ENCODE measurements at regions of chr11 and their contacts with region 1.

Region 1: GRCh38 chr11:29208117-29208516 is 808.7 kb downstream of the KCNA4 start:
- DNase-seq: no peak
- ATAC-seq: no peak
- H3K4me3 ChIP-seq: no peak overlapping the region
- H3K27ac ChIP-seq: no peak overlapping the region
- H3K4me1 ChIP-seq: no peaks in the 10 kb centered on the region
- H3K27me3 ChIP-seq: no peaks in the 10 kb centered on the region
- CTCF ChIP-seq: no peak
- EP300 ChIP-seq: no peak
- POLR2A ChIP-seq: no peak
- RAD21 ChIP-seq: no peak

Region 2: GRCh38 chr11:29260939-29261705 is 53.0 kb after region 1 on chr11:
- CTCF ChIA-PET with region 1: no interaction called
- POLR2A ChIA-PET with region 1: no interaction called
- in situ Hi-C with region 1: no loop called
- intact Hi-C with region 1: loop called (anchors 1 kb)
- DNase-seq: peak; percentile 51
- ATAC-seq: peak; percentile 100
- H3K4me3 ChIP-seq: no peak overlapping the region
- H3K27ac ChIP-seq: no peak overlapping the region
- H3K4me1 ChIP-seq: no peaks in the 10 kb centered on the region
- H3K27me3 ChIP-seq: no peaks in the 10 kb centered on the region
- CTCF ChIP-seq: peak; percentile 45
- EP300 ChIP-seq: no peak
- POLR2A ChIP-seq: no peak
- RAD21 ChIP-seq: no peak

Measured in HepG2 (cell line).